Mammary epithelial cell (primary cell): ENCODE measurements at regions of chr12 and their contacts with region 1.

Region 1: GRCh38 chr12:58285551-58285950 is 344.2 kb downstream of the ATP23 start:
- DNase-seq: no peak
- H3K4me3 ChIP-seq: no peak overlapping the region
- H3K27ac ChIP-seq: no peak overlapping the region
- H3K4me1 ChIP-seq: no peaks in the 10 kb centered on the region
- H3K27me3 ChIP-seq: no peaks in the 10 kb centered on the region
- CTCF ChIP-seq: no peak

Region 2: DNA sequence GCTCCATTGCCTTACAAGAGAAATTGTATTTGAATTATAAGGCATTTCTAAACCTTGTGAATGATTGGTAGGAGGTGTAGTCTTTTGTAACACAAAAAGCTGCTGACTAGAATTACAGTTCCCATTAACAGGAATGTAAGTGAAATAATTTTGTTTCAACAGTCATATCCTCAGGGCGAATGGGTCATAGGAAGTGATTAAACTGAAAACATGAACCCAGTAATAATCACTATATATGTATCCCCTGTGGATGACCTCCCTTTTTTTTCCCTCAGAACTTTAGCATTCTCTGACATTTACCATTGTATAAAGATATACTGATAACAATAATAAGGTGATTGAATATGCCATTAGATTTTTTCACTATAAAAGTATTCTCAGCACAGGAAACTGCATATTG is 31.9 kb before region 1 on chr12:
- CTCF ChIA-PET with region 1: no interaction called
- dilution Hi-C with region 1: no loop called
- in situ Hi-C with region 1: no loop called
- intact Hi-C with region 1: loop called (anchors 1 kb)
- DNase-seq: peak; percentile 70
- H3K4me3 ChIP-seq: no peak overlapping the region
- H3K27ac ChIP-seq: no peak overlapping the region
- H3K4me1 ChIP-seq: peaks cover 9% of the 10 kb centered on the region
- H3K27me3 ChIP-seq: no peaks in the 10 kb centered on the region
- CTCF ChIP-seq: no peak

Region 3: DNA sequence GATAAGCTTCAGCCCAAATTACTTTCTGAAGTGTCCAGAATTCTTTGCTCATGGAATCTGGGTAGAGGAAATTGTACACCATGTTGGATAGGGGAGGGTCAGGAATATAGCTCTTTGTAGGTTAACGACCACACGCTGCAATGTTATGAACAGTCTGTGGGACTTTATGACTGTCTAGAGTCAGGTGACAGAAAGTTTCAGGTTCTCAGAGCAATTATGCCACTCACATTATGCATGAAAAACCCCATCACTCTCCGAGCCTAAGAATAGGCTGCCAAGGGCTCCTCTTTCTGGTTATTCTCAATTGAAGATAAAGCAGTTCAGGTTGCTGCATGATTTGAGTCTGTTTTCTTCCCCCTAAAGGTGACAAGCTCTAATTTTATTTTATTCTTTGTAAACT is 86.7 kb after region 1 on chr12:
- CTCF ChIA-PET with region 1: no interaction called
- dilution Hi-C with region 1: no loop called
- in situ Hi-C with region 1: no loop called
- intact Hi-C with region 1: no loop called
- DNase-seq: no peak
- H3K4me3 ChIP-seq: no peak overlapping the region
- H3K27ac ChIP-seq: no peak overlapping the region
- H3K4me1 ChIP-seq: peaks cover 10% of the 10 kb centered on the region
- H3K27me3 ChIP-seq: no peaks in the 10 kb centered on the region
- CTCF ChIP-seq: no peak